ENCODE measurements at regions of chr10 and their contacts with region 1.

Region 1: DNA sequence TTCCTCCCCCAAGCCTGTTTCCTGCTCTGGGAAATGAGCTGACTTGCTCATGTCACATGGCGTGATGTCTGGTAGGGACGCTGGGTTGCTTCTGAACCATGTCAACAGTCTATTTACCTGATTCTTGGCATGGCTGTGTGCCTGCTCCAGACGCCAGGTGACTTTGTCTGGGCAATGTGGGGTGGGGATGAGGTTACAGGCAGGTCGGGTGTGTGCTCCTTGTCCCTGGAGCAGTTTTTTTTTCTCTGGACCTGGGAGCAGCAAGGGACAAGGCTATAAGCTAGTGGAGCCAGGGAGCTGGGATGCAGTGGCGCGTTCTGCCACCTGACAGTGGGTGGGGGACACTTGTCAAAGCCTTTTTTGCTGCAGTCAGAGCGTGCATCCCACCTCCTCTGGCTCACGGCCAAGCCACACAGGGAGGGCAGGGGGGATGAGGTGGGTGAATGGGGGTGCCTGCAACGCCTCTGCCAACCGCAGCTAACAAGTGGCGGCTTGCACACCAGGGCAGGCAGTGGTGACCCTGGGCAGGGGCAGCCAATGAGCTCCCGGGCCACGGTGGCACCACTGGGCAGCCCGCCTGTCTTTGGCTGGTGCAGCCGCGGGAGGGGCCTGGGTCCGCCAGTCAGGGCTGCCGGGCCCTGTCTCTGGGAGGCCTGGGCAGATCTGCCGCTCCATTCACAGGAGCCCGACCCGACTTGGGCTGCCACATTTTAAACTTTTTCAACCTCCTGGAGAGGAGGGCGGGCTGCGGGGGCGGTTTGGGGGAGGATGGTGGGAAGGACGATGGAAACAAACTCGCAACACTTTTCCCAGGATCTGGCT is 22.9 kb downstream of the DNAJB12 start:
- DNase-seq: peak; percentile 81
- ATAC-seq: peak; percentile 82
- H3K4me3 Mint-ChIP-seq: peak overlapping the region; percentile 71
- H3K27ac Mint-ChIP-seq: peak overlapping the region; percentile 94
- H3K4me1 Mint-ChIP-seq: peaks cover 93% of the 10 kb centered on the region
- H3K27me3 Mint-ChIP-seq: no peaks in the 10 kb centered on the region
- CTCF ChIP-seq: no peak

Region 2: DNA sequence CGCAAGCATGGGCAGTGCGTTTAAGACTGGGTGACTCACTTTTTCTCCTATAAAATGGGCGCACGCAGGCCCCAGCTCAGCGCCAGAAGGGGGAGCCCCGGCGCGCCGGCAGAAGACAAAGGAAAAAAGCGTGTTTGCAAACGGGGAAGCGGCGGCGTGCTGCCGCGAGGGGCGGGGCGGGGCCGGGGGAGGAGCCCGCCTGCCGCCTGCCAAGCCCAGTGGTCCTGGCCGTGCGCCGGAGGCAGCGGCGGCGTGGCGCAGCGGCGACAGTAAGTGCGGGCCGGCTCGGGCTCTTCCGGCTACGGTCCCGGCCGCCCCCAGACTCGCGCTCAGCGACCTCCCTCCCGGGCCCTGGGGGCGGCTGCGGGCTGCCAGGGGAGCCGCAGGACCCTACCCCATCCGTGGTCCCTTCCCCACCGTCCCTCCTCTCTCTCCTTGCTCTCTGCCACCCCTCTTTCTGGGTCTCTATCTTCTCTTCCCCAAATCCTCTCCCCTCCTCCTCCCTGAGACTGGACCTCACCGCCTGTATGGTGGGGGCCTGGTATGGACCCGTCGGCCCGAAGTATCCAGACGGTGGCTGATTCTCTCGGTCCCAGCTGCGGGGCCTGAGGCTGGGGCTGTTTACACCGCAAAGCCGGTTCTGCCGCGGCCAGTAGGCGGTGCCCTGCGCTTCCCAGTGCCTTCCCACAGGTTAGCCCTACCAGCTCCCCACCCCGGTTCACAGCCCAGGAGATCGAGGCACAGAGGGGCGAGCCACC is 1012.6 kb before region 1 on chr10 and contains the start of gene SLC29A3:
- CTCF ChIA-PET with region 1: no interaction called
- POLR2A ChIA-PET with region 1: no interaction called
- intact Hi-C with region 1: loop called (anchors 2 kb)
- DNase-seq: peak; percentile 72
- ATAC-seq: peak; percentile 90
- H3K4me3 Mint-ChIP-seq: peak within 1 kb of the TSS; percentile 96
- H3K27ac Mint-ChIP-seq: peak within 1 kb of the TSS; percentile 80
- H3K4me1 Mint-ChIP-seq: peaks cover 13% of the 10 kb centered on the region
- H3K27me3 Mint-ChIP-seq: no peaks in the 10 kb centered on the region
- CTCF ChIP-seq: no peak
- total RNA-seq, gene SLC29A3: 3.1 and 4.3 TPM in 2 replicates

Region 3: GRCh38 chr10:72048450-72049124 is 283.2 kb before region 1 on chr10:
- CTCF ChIA-PET with region 1: interaction called, 59 read pairs
- POLR2A ChIA-PET with region 1: interaction called, 8 read pairs
- intact Hi-C with region 1: loop called (anchors 1 kb)
- DNase-seq: peak; percentile 74
- ATAC-seq: peak; percentile 99
- H3K4me3 Mint-ChIP-seq: no peak overlapping the region
- H3K27ac Mint-ChIP-seq: peak overlapping the region; percentile 41
- H3K4me1 Mint-ChIP-seq: peaks cover 19% of the 10 kb centered on the region
- H3K27me3 Mint-ChIP-seq: no peaks in the 10 kb centered on the region
- CTCF ChIP-seq: peak; percentile 40

Region 4: DNA sequence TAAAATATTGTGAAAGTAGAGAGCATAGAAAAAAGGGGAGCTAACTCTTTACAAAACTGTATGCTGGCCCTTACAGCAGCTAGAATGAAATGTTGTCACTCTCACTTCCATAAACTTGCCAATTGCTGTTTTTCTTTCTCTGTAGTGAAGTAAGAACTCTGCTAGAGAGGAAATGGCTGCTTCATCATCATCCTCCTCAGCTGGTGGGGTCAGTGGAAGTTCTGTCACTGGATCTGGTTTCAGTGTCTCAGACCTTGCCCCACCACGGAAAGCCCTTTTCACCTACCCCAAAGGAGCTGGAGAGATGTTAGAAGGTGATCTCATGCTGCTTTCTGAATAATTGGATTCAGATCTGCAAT is 108.1 kb before region 1 on chr10:
- CTCF ChIA-PET with region 1: interaction called, 19 read pairs
- POLR2A ChIA-PET with region 1: interaction called, 210 read pairs
- intact Hi-C with region 1: loop called (anchors 1 kb)
- DNase-seq: no peak
- ATAC-seq: peak; percentile 47
- H3K4me3 Mint-ChIP-seq: peak overlapping the region; percentile 59
- H3K27ac Mint-ChIP-seq: peak overlapping the region; percentile 84
- H3K4me1 Mint-ChIP-seq: peaks cover 67% of the 10 kb centered on the region
- H3K27me3 Mint-ChIP-seq: no peaks in the 10 kb centered on the region
- CTCF ChIP-seq: no peak

Region 5: DNA sequence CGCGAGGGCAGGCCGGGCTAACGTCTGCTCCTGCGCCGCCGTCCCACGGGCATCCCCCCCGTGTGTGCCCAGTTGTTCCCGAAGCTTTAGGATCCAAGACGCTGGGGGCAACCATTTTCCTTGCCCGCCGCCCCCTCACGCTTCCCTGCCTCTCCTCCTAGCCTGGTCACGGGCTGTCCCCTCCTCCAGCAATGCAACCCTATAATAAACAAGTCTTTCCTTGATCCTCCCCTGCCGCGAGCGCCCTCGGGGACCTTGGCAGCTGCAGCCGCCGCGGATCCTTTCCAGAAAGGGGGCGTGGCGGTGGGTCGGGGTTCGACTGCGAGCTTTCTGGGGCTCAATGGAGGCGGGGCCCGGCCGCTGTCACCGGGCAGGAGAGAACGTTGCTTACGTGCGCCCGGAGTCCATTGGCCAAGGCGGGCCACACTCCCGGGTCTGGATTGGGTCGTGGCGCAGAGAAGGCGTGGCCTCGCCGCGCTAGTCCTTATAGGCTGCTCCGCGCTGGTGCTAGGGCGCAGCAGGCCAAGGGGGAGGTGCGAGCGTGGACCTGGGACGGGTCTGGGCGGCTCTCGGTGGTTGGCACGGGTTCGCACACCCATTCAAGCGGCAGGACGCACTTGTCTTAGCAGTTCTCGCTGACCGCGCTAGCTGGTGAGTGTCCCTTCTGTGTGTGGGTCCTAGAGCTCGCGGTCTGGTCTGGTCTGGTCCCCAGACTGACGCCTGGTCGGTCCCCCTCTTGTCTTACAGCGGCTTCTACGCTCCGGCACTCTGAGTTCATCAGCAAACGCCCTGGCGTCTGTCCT is 58.2 kb before region 1 on chr10 and contains the start of gene DDIT4:
- CTCF ChIA-PET with region 1: interaction called, 131 read pairs
- POLR2A ChIA-PET with region 1: interaction called, 967 read pairs
- intact Hi-C with region 1: loop called (anchors 1 kb)
- DNase-seq: peak; percentile 95
- ATAC-seq: peak; percentile 93
- H3K4me3 Mint-ChIP-seq: peak within 1 kb of the TSS; percentile 98
- H3K27ac Mint-ChIP-seq: peak within 1 kb of the TSS; percentile 94
- H3K4me1 Mint-ChIP-seq: peaks cover 40% of the 10 kb centered on the region
- H3K27me3 Mint-ChIP-seq: no peaks in the 10 kb centered on the region
- CTCF ChIP-seq: no peak
- total RNA-seq, gene DDIT4: 175 and 180 TPM in 2 replicates

Region 6: GRCh38 chr10:72354478-72355213 is 22.8 kb after region 1 on chr10 and contains the start of gene DNAJB12:
- CTCF ChIA-PET with region 1: interaction called, 5 read pairs
- POLR2A ChIA-PET with region 1: interaction called, 19 read pairs
- intact Hi-C with region 1: no loop called
- DNase-seq: peak; percentile 89
- ATAC-seq: peak; percentile 84
- H3K4me3 Mint-ChIP-seq: peak within 1 kb of the TSS; percentile 99
- H3K27ac Mint-ChIP-seq: peak within 1 kb of the TSS; percentile 99
- H3K4me1 Mint-ChIP-seq: peaks cover 35% of the 10 kb centered on the region
- H3K27me3 Mint-ChIP-seq: no peaks in the 10 kb centered on the region
- CTCF ChIP-seq: no peak
- total RNA-seq, gene DNAJB12: 39.0 and 39.9 TPM in 2 replicates

Region 7: DNA sequence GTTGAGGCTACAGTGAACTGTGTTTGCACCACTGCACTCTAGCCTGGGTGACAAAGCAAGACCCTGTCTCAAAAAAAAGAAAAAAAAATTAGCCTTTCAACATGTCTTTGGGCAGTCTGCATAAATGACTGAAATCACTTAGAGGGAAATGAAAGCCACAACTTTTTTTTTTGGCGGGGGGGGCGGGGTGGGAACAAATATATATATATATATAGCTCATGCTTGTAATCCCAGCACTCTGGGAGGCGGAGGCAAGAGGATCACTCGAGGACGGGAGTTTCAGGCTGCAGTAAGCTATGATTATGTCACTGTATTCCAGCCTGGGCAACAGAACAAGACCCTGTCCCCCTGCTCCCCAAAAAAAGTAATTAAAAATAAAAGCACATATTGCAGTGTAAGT is 317.5 kb after region 1 on chr10:
- CTCF ChIA-PET with region 1: no interaction called
- POLR2A ChIA-PET with region 1: no interaction called
- intact Hi-C with region 1: no loop called
- DNase-seq: no peak
- ATAC-seq: no peak
- H3K4me3 Mint-ChIP-seq: no peak overlapping the region
- H3K27ac Mint-ChIP-seq: no peak overlapping the region
- H3K4me1 Mint-ChIP-seq: peaks cover 2% of the 10 kb centered on the region
- H3K27me3 Mint-ChIP-seq: no peaks in the 10 kb centered on the region
- CTCF ChIP-seq: no peak